CD8-positive, alpha-beta T cell (primary cell): ENCODE measurements at regions of chr16 and their contacts with region 1.

Region 1: DNA sequence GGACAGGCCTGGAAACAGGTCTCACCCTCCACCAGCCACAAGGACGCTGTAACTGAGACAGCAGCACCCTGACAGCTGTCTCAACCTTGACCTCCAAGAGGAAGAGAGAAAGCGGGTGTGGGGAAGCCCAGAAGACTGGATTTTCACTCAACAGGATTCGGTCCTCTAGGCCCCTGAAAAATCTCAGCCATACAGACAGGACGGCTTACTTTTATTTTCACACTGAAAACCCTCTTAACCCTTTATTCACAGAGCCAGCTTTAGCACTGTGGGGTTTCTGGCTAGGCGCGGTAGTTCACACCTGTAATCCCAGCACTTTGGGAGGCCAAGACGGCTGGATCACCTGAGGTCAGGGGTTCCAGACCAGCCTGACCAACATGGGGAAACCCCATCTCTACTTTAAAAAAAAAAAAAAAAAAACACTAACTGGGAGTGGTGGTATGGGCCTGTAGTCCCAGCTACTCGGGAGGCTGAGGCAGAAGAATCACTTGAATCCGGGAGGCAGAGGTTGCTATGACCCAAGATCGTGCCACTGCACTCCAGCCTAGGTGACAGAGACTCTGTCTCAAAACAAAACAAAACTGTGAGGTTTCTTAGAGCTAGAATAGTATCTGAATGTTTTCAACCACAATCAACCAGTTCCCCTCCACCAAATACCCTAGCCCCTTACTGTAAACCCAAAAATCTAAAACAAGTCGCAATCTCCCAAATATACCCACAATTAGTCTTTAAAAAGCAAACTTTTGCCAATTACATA is 5.3 kb downstream of the ANKRD11 start:
- DNase-seq: peak in 3 of 9 experiments; percentile 31 to 71 (median 56)
- ATAC-seq: no peak
- H3K4me3 ChIP-seq: peak overlapping the region; percentile 29 to 46
- H3K4me3 Mint-ChIP-seq: peak overlapping the region; percentile 77
- H3K27ac ChIP-seq: peak overlapping the region; percentile 4 to 69
- H3K27ac Mint-ChIP-seq: peak overlapping the region; percentile 95
- H3K4me1 ChIP-seq: peaks cover 82% of the 10 kb centered on the region
- H3K4me1 Mint-ChIP-seq: peaks cover 82% of the 10 kb centered on the region
- H3K27me3 ChIP-seq: no peaks in the 10 kb centered on the region
- H3K27me3 Mint-ChIP-seq: no peaks in the 10 kb centered on the region
- CTCF ChIP-seq: no peak

Region 2: DNA sequence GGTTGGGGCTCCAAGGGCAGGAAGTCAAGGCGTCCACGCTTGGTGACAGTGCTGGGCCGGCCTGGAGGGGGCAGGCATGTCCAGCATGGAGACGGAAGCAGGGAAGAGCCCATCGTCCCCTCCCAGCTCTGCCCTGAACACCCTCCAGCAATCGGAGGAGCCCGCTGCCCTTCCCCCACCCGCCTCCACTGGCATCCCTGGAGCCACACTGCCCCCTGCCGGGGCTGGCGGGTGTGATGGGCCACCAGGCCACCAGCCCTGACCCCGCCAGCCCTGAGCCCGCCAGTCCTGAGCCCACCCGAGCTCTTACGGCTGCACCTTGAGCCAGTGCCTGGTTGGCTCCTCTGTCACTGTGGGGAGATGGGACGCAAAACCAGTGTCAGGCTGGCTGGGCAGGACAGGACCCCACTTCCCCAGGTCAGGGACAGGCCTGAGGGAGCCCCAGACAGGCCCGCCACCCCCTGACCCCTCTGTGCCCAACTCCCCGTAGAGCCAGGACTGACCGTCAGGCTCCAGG is 317.6 kb before region 1 on chr16:
- CTCF ChIA-PET with region 1: no interaction called
- POLR2A ChIA-PET with region 1: no interaction called
- intact Hi-C with region 1: no loop called
- DNase-seq: peak; percentile 71 to 92 (median 82)
- ATAC-seq: peak; percentile 13
- H3K4me3 ChIP-seq: no peak overlapping the region
- H3K4me3 Mint-ChIP-seq: no peak overlapping the region
- H3K27ac ChIP-seq: no peak overlapping the region
- H3K27ac Mint-ChIP-seq: no peak overlapping the region
- H3K4me1 ChIP-seq: peaks cover 29% of the 10 kb centered on the region
- H3K4me1 Mint-ChIP-seq: peaks cover 6% of the 10 kb centered on the region
- H3K27me3 ChIP-seq: peaks cover 0 to 2% of the 10 kb centered on the region in 2 experiments
- H3K27me3 Mint-ChIP-seq: no peaks in the 10 kb centered on the region
- CTCF ChIP-seq: peak; percentile 69

Region 3: DNA sequence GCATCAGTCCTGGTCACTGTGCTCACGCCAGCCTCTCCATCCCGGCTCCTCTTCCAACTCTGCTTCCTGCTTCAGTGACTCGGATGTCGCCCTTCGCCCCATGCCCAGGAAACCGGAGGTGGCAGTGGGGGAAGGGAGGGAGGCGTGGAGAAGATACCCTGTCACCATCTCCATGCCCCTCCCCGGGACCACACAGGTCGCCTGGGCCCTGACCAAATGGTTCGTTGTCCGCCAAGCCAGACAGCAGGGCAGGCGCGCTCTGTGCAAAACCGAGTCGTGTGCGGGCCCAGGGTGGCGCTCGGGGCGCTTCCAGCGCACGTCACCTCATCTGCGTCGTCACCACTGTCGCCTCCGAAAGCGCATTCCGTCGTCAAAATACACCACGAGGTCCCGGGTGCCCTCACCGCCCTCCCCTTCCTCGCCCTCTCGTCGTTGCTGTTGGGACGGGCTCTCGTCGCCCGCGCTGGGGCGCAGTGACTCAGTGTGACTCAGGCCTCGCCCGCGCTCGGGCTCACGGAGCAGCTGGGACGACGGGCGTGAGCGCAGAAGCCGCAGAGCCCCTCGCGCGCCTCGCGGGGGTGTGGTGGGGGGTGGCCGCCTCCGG is 228.3 kb before region 1 on chr16:
- CTCF ChIA-PET with region 1: no interaction called
- POLR2A ChIA-PET with region 1: no interaction called
- intact Hi-C with region 1: no loop called
- DNase-seq: peak; percentile 43 to 92 (median 70)
- ATAC-seq: peak; percentile 95
- H3K4me3 ChIP-seq: peak overlapping the region; percentile 24 to 49
- H3K4me3 Mint-ChIP-seq: peak overlapping the region; percentile 70
- H3K27ac ChIP-seq: no peak overlapping the region
- H3K27ac Mint-ChIP-seq: peak overlapping the region; percentile 52
- H3K4me1 ChIP-seq: peaks cover 12% of the 10 kb centered on the region
- H3K4me1 Mint-ChIP-seq: peaks cover 13% of the 10 kb centered on the region
- H3K27me3 ChIP-seq: peaks cover 0 to 14% of the 10 kb centered on the region in 2 experiments
- H3K27me3 Mint-ChIP-seq: peaks cover 19% of the 10 kb centered on the region
- CTCF ChIP-seq: no peak

Region 4: GRCh38 chr16:89453501-89454321 is 31.4 kb before region 1 on chr16:
- CTCF ChIA-PET with region 1: interaction called, 4 read pairs
- POLR2A ChIA-PET with region 1: interaction called, 5 read pairs
- intact Hi-C with region 1: loop called in 1 of 2 experiments (anchors 2 kb)
- DNase-seq: peak in 2 of 9 experiments; percentile 41 to 54
- ATAC-seq: peak; percentile 21
- H3K4me3 ChIP-seq: no peak overlapping the region
- H3K4me3 Mint-ChIP-seq: peak overlapping the region; percentile 48
- H3K27ac ChIP-seq: no peak overlapping the region
- H3K27ac Mint-ChIP-seq: peak overlapping the region; percentile 23
- H3K4me1 ChIP-seq: peaks cover 87% of the 10 kb centered on the region
- H3K4me1 Mint-ChIP-seq: peaks cover 80% of the 10 kb centered on the region
- H3K27me3 ChIP-seq: no peaks in the 10 kb centered on the region
- H3K27me3 Mint-ChIP-seq: no peaks in the 10 kb centered on the region
- CTCF ChIP-seq: no peak

Region 5: GRCh38 chr16:89466920-89467319 is 18.2 kb before region 1 on chr16:
- CTCF ChIA-PET with region 1: interaction called, 5 read pairs
- POLR2A ChIA-PET with region 1: interaction called, 10 read pairs
- intact Hi-C with region 1: no loop called
- DNase-seq: no peak
- ATAC-seq: no peak
- H3K4me3 ChIP-seq: no peak overlapping the region
- H3K4me3 Mint-ChIP-seq: peak overlapping the region; percentile 32
- H3K27ac ChIP-seq: no peak overlapping the region
- H3K27ac Mint-ChIP-seq: no peak overlapping the region
- H3K4me1 ChIP-seq: peaks cover 48% of the 10 kb centered on the region
- H3K4me1 Mint-ChIP-seq: peaks cover 72% of the 10 kb centered on the region
- H3K27me3 ChIP-seq: no peaks in the 10 kb centered on the region
- H3K27me3 Mint-ChIP-seq: no peaks in the 10 kb centered on the region
- CTCF ChIP-seq: no peak